ENCODE measurements at regions of chr20 and their contacts with region 1.

Region 1: DNA sequence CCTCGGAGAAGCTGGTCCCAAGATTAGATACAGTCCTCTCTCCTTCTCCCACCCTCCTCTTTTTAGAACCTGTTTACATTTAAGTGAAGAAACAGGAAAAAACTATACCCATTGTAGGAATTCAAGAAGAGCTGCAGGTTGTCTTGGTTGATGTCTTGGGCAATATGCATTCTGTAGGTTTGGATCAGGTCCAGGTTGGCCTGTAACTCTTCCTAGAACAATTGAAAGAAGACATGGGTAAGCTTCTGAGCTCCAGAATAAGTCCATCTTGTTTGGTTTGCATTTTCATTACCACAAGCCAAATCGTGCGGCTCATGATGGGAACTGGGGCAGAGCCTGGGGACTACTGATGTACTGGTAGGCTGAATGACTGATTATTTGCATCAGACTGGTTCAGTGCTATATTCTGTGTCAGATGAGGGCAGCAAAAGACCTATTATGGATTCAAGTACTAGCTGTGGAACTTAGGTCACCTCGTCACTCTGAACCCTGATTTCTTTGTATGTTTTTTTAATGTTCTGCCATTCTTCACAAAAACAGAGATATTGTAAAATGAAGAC is 20.3 kb upstream of the SLA2 start:
- DNase-seq: peak in 2 of 9 experiments; percentile 32 to 50
- ATAC-seq: peak; percentile 55
- H3K4me3 ChIP-seq: no peak overlapping the region
- H3K4me3 Mint-ChIP-seq: no peak overlapping the region
- H3K27ac ChIP-seq: no peak overlapping the region
- H3K27ac Mint-ChIP-seq: no peak overlapping the region
- H3K4me1 ChIP-seq: no peaks in the 10 kb centered on the region
- H3K4me1 Mint-ChIP-seq: peaks cover 1% of the 10 kb centered on the region
- H3K27me3 ChIP-seq: no peaks in the 10 kb centered on the region
- H3K27me3 Mint-ChIP-seq: no peaks in the 10 kb centered on the region
- CTCF ChIP-seq: no peak

Region 2: GRCh38 chr20:36655004-36655403 is 11.3 kb before region 1 on chr20:
- CTCF ChIA-PET with region 1: interaction called, 10 read pairs
- POLR2A ChIA-PET with region 1: no interaction called
- intact Hi-C with region 1: no loop called
- DNase-seq: no peak
- ATAC-seq: no peak
- H3K4me3 ChIP-seq: no peak overlapping the region
- H3K4me3 Mint-ChIP-seq: no peak overlapping the region
- H3K27ac ChIP-seq: no peak overlapping the region
- H3K27ac Mint-ChIP-seq: no peak overlapping the region
- H3K4me1 ChIP-seq: peaks cover 20% of the 10 kb centered on the region
- H3K4me1 Mint-ChIP-seq: peaks cover 19% of the 10 kb centered on the region
- H3K27me3 ChIP-seq: no peaks in the 10 kb centered on the region
- H3K27me3 Mint-ChIP-seq: no peaks in the 10 kb centered on the region
- CTCF ChIP-seq: no peak

Measured in CD8-positive, alpha-beta T cell (primary cell).